ENCODE measurements at regions of chr22 and their contacts with region 1.

Region 1: GRCh38 chr22:37745548-37746365 is 48.9 kb downstream of the TRIOBP start:
- DNase-seq: peak; percentile 96
- H3K4me3 ChIP-seq: peak overlapping the region; percentile 76 to 98 (median 88)
- H3K27ac ChIP-seq: peak overlapping the region; percentile 90 to 96 (median 91)
- H3K4me1 ChIP-seq: peaks cover 61 to 89% (median 89%) of the 10 kb centered on the region in 4 donors
- H3K27me3 ChIP-seq: no peaks in the 10 kb centered on the region
- CTCF ChIP-seq: no peak
- EP300 ChIP-seq: no peak
- POLR2A ChIP-seq: no peak

Region 2: GRCh38 chr22:37807410-37808293 is 61.9 kb after region 1 on chr22 and contains the start of gene GCAT:
- intact Hi-C with region 1: loop called (anchors 5 kb)
- DNase-seq: peak; percentile 99
- H3K4me3 ChIP-seq: peak within 1 kb of the TSS; percentile 61 to 73 (median 66)
- H3K27ac ChIP-seq: peak within 1 kb of the TSS; percentile 85 to 95 (median 90)
- H3K4me1 ChIP-seq: peaks cover 43 to 59% (median 57%) of the 10 kb centered on the region in 4 donors
- H3K27me3 ChIP-seq: no peaks in the 10 kb centered on the region
- CTCF ChIP-seq: no peak
- EP300 ChIP-seq: no peak
- POLR2A ChIP-seq: peak; percentile 34
- total RNA-seq, gene GCAT: 11.6 to 15.2 (median 12.3) TPM

Region 3: GRCh38 chr22:37832022-37832857 is 86.5 kb after region 1 on chr22:
- intact Hi-C with region 1: no loop called
- DNase-seq: no peak
- H3K4me3 ChIP-seq: no peak overlapping the region
- H3K27ac ChIP-seq: no peak overlapping the region
- H3K4me1 ChIP-seq: peaks cover 0 to 8% (median 3%) of the 10 kb centered on the region in 4 donors
- H3K27me3 ChIP-seq: no peaks in the 10 kb centered on the region
- CTCF ChIP-seq: no peak
- EP300 ChIP-seq: no peak
- POLR2A ChIP-seq: no peak

Region 4: DNA sequence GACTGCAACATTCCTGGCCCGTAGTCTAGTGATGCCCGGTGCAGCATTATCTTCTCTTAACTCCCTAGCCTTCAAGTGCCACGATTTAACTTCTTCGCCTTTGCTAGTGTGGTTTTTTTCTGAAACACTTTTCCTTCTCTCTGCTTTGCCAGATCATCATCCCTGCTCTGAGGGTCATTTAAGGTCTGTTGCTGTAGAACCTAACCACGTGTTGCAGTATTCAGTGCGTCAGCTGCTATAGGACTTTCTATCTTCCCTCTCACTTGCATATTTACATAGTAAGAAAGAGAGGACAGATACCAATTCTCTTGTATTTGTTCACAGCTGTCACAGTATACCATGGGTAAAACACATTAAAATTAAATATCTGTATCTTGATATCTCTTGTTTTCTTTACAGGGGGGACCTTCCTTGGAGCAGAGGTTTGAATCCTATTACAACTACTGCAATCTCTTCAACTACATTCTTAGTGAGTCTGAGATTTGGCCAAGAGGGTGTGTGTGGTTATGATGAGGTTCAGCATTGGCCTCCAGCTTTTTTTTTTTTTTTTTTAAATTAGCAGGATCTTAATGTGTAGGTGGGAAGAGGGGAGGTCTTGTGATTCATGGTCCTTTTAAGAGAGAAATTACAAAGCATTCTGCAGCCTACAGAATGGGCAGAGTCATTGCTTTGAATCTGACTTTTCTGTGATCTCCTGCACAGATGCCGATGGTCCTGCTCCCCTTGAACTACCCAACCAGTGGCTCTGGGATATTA is 117.0 kb after region 1 on chr22:
- intact Hi-C with region 1: no loop called
- DNase-seq: no peak
- H3K4me3 ChIP-seq: no peak overlapping the region
- H3K27ac ChIP-seq: peak overlapping the region in 2 of 4 donors; percentile 22 to 32
- H3K4me1 ChIP-seq: peaks cover 6 to 19% (median 15%) of the 10 kb centered on the region in 4 donors
- H3K27me3 ChIP-seq: no peaks in the 10 kb centered on the region
- CTCF ChIP-seq: no peak
- EP300 ChIP-seq: no peak
- POLR2A ChIP-seq: no peak